H1 (cell line): ENCODE measurements at regions of chr5 and their contacts with region 1.

Region 1: DNA sequence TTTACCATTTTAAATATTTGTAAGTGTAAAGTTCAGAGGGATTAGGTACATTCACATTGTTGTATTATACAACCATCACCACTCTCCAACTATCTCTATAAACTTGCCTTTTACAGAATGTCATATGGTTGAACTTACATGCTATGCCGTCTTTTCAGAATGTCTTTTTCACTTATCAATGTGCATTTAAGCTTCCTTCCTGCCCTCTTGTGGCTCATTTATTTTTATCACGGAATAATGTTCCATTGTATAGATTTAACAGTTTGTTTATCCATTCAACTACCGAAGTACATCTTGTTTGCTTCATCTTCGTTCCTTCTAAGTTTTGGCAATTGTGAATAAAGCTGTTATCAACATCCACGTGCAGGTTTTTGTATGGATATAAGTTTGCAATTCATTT is 133.3 kb upstream of the C6 start:
- DNase-seq: no peak
- H3K4me3 ChIP-seq: no peak overlapping the region
- H3K27ac ChIP-seq: no peak overlapping the region
- H3K4me1 ChIP-seq: no peaks in the 10 kb centered on the region
- H3K27me3 ChIP-seq: no peaks in the 10 kb centered on the region
- CTCF ChIP-seq: no peak
- EP300 ChIP-seq: no peak
- POLR2A ChIP-seq: no peak
- RAD21 ChIP-seq: peak in 1 of 2 experiments; percentile 5; a peak in 2 of 4 replicates

Region 2: GRCh38 chr5:41356786-41357185 is 10.2 kb after region 1 on chr5:
- CTCF ChIA-PET with region 1: interaction called, 12 read pairs
- POLR2A ChIA-PET with region 1: no interaction called
- DNase-seq: no peak
- H3K4me3 ChIP-seq: no peak overlapping the region
- H3K27ac ChIP-seq: no peak overlapping the region
- H3K4me1 ChIP-seq: peaks cover 0 to 3% (median under 1%) of the 10 kb centered on the region in 4 experiments; a peak in 2 of 7 replicates
- H3K27me3 ChIP-seq: no peaks in the 10 kb centered on the region
- CTCF ChIP-seq: no peak
- EP300 ChIP-seq: no peak
- POLR2A ChIP-seq: no peak
- RAD21 ChIP-seq: no peak

Region 3: GRCh38 chr5:41392016-41392415 is 45.4 kb after region 1 on chr5:
- CTCF ChIA-PET with region 1: no interaction called
- POLR2A ChIA-PET with region 1: no interaction called
- DNase-seq: no peak
- H3K4me3 ChIP-seq: no peak overlapping the region
- H3K27ac ChIP-seq: no peak overlapping the region
- H3K4me1 ChIP-seq: no peaks in the 10 kb centered on the region
- H3K27me3 ChIP-seq: no peaks in the 10 kb centered on the region
- CTCF ChIP-seq: no peak
- EP300 ChIP-seq: no peak
- POLR2A ChIP-seq: no peak
- RAD21 ChIP-seq: no peak

Region 4: GRCh38 chr5:41559184-41559583 is 212.6 kb after region 1 on chr5:
- CTCF ChIA-PET with region 1: no interaction called
- POLR2A ChIA-PET with region 1: no interaction called
- DNase-seq: no peak
- H3K4me3 ChIP-seq: no peak overlapping the region
- H3K27ac ChIP-seq: no peak overlapping the region
- H3K4me1 ChIP-seq: no peaks in the 10 kb centered on the region
- H3K27me3 ChIP-seq: no peaks in the 10 kb centered on the region
- CTCF ChIP-seq: no peak
- EP300 ChIP-seq: no peak
- POLR2A ChIP-seq: no peak
- RAD21 ChIP-seq: no peak